HCT116 (cell line): ENCODE measurements at regions of chr6 and their contacts with region 1.

Region 1: DNA sequence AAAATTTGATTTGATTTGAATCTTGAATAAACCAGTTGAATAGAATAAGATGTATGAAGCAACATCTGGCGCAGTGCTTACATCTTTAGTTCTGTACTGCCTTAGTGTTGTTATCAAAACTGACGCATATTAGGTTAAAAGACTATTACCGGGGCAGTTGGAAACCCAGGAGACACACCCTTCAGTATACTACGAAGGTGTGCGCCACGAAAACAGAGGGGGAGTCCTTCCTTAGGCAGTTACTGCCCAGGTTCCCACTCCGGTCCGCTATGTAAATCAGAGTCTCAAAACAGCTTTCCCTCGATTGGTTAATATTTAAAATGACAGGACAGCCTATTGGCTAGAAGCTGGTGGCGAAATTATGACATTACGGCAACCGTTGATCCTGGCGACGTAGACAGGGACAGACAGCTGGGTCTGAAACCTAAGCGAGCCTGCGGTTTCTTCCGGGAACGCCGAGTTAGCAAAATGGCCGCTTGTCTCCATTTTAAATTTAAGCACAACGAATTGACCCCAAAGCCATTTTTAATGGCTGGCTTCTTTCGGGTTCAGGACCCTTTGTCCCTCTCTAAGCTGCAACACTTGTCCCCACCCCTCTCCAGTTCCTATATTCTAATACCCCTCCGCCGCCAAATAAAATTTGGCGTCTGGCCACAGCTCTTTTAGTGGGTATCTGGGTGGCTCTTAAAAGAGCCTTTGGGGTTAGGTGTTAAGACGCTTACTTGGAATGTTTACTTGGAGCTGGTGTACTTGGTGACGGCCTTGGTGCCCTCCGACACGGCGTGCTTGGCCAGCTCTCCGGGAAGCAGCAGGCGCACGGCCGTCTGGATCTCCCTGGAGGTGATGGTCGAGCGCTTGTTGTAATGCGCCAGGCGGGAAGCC is 35.8 kb downstream of the HFE start:
- DNase-seq: peak; percentile 99
- ATAC-seq: peak; percentile 55
- H3K4me3 ChIP-seq: peak overlapping the region; percentile 70 to 91
- H3K27ac ChIP-seq: peak overlapping the region; percentile 99
- H3K4me1 ChIP-seq: peaks cover 47 to 69% of the 10 kb centered on the region in 2 experiments
- H3K27me3 ChIP-seq: no peaks in the 10 kb centered on the region
- CTCF ChIP-seq: no peak
- POLR2A ChIP-seq: peak; percentile 98
- RAD21 ChIP-seq: peak; percentile 30

Region 2: DNA sequence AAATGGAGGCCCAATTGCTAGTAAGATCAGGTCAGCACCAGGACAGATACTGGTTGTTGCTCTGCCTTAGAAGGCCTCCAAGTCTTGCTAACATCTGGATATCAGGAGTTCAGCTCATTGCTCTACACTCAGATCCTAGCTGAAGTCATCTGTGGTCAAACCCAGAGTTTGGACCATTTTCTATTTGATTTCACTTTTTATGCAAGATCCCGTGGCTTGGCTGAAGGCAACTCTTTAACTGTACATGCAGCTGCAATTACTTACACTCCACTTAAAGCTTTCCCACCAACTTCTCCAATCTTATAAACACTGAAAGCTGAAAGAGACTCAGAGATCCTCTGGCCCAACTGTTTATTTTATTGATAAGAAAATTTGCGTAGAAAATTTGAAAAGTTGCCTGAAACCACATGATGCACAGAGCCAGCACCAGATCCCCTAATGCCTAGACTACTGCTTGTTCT is 195.2 kb before region 1 on chr6:
- CTCF ChIA-PET with region 1: no interaction called
- POLR2A ChIA-PET with region 1: no interaction called
- RAD21 ChIA-PET with region 1: no interaction called
- intact Hi-C with region 1: no loop called
- DNase-seq: no peak
- ATAC-seq: no peak
- H3K4me3 ChIP-seq: no peak overlapping the region
- H3K27ac ChIP-seq: no peak overlapping the region
- H3K4me1 ChIP-seq: no peaks in the 10 kb centered on the region
- H3K27me3 ChIP-seq: no peaks in the 10 kb centered on the region
- CTCF ChIP-seq: no peak
- POLR2A ChIP-seq: no peak
- RAD21 ChIP-seq: no peak

Region 3: GRCh38 chr6:26031595-26032339 is 91.3 kb before region 1 on chr6:
- CTCF ChIA-PET with region 1: no interaction called
- POLR2A ChIA-PET with region 1: interaction called, 89 read pairs
- RAD21 ChIA-PET with region 1: no interaction called
- intact Hi-C with region 1: loop called (anchors 2 kb)
- DNase-seq: peak; percentile 99
- ATAC-seq: peak; percentile 66
- H3K4me3 ChIP-seq: peak overlapping the region; percentile 70 to 74
- H3K27ac ChIP-seq: peak overlapping the region; percentile 98
- H3K4me1 ChIP-seq: peaks cover 51 to 87% of the 10 kb centered on the region in 2 experiments
- H3K27me3 ChIP-seq: no peaks in the 10 kb centered on the region
- CTCF ChIP-seq: no peak
- POLR2A ChIP-seq: peak; percentile 99
- RAD21 ChIP-seq: peak; percentile 5; the same call in 1 of the 2 replicates

Region 4: GRCh38 chr6:26136321-26136720 is 13.3 kb after region 1 on chr6:
- CTCF ChIA-PET with region 1: no interaction called
- POLR2A ChIA-PET with region 1: interaction called, 61 read pairs
- RAD21 ChIA-PET with region 1: no interaction called
- intact Hi-C with region 1: no loop called
- DNase-seq: no peak
- ATAC-seq: no peak
- H3K4me3 ChIP-seq: no peak overlapping the region
- H3K27ac ChIP-seq: no peak overlapping the region
- H3K4me1 ChIP-seq: 0 out of 4 replicates have a peak, but pooled peaks cover 0 to under 1% of the 10 kb centered on the region in 2 experiments
- H3K27me3 ChIP-seq: no peaks in the 10 kb centered on the region
- CTCF ChIP-seq: no peak
- POLR2A ChIP-seq: no peak
- RAD21 ChIP-seq: no peak

Region 5: DNA sequence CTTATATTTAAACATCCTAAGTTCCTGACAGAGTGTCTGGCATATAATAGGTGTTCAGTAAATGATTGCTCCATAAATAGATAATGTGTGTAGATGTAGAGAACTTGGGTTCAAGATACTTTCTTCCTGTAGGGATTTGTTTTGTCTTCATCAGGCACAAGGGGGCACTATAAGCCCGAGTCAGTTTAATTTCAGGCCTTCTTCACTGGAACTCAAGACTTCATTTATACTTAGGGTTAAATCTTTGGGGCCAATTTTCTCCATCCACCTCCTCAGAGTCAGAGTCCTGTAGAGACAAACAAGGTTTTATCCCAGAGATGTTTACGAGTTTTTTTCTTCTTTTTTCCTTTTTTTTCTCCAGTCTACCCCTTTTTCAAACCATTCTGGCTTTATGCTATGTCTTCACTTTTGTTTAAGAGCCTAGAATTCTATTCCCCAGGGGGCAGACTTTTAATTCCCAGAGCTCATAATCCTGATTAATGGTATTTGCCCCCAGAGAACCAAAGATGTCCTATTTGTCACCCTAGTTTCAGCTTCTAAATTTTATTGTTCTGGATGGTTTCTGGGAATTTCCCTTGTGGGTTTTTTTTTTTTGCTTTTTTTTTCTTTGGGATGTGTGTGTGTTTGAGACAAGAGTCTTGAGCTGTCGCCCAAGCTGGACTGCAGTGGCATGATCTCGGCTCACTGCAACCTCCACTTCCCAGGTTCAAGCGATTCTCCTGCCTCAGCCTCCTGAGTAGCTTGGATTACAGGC is 52.6 kb after region 1 on chr6:
- CTCF ChIA-PET with region 1: no interaction called
- POLR2A ChIA-PET with region 1: interaction called, 21 read pairs
- RAD21 ChIA-PET with region 1: no interaction called
- intact Hi-C with region 1: no loop called
- DNase-seq: no peak
- ATAC-seq: no peak
- H3K4me3 ChIP-seq: no peak overlapping the region
- H3K27ac ChIP-seq: peak overlapping the region; percentile 46; the same call in 1 of the 2 replicates
- H3K4me1 ChIP-seq: peaks cover 11 to 28% of the 10 kb centered on the region in 2 experiments
- H3K27me3 ChIP-seq: no peaks in the 10 kb centered on the region
- CTCF ChIP-seq: peak; percentile 62 to 75 (median 73)
- POLR2A ChIP-seq: no peak
- RAD21 ChIP-seq: peak; percentile 83

Region 6: GRCh38 chr6:26204332-26205165 is 81.5 kb after region 1 on chr6:
- CTCF ChIA-PET with region 1: interaction called, 3 read pairs
- POLR2A ChIA-PET with region 1: interaction called, 152 read pairs
- RAD21 ChIA-PET with region 1: no interaction called
- intact Hi-C with region 1: loop called (anchors 1 kb)
- DNase-seq: peak; percentile 98
- ATAC-seq: peak; percentile 72
- H3K4me3 ChIP-seq: peak overlapping the region; percentile 63 to 71
- H3K27ac ChIP-seq: peak overlapping the region; percentile 98
- H3K4me1 ChIP-seq: peaks cover 26 to 40% of the 10 kb centered on the region in 2 experiments
- H3K27me3 ChIP-seq: no peaks in the 10 kb centered on the region
- CTCF ChIP-seq: peak in 1 of 3 experiments; percentile 20; a peak in 2 of 6 replicates
- POLR2A ChIP-seq: peak; percentile 99
- RAD21 ChIP-seq: peak; percentile 2; the same call in 1 of the 2 replicates

Region 7: DNA sequence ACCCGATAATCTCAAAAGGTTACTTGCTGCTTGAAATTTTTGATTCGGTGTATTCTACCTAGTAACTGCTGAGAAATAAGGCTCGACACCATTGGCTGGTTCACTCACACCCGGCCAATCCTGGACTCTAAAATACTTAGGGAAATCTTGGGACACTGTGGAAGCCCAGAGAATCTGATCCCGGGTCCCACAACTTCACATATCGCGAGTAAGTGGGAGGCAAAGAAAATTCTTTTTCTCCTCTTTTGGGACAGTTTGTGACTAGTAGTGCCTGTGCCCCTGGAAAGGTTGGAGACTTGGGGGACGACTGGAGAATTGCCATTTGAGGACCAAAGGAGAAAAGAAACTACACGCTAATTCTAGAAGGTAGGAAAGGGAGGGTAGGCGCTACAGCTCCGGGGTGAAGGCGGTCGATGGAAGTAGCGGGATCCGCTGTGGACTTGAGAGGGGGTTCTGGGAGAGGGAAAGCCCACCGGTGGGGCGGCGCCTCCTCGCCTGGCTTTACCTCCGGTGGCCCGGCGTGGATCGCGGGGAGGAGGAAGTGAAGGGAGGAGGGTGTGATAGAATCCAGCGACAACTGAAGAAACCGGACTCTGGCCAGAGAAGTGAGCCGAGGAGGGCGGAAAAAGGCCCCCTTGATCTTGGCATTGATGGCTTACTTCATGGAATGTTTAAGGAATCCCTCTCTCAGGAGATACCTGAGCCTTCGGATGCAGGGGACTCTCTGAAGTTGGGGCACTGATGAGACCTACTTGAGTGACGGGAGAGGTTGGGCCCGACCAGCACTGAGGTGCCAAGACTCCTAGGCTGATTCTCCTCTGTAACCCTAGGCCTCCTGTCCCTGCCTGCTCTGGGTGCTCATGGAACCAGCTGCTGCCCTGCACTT is 298.5 kb after region 1 on chr6:
- CTCF ChIA-PET with region 1: no interaction called
- POLR2A ChIA-PET with region 1: no interaction called
- RAD21 ChIA-PET with region 1: no interaction called
- intact Hi-C with region 1: no loop called
- DNase-seq: peak; percentile 86
- ATAC-seq: peak; percentile 98
- H3K4me3 ChIP-seq: peak overlapping the region; percentile 84 to 93
- H3K27ac ChIP-seq: peak overlapping the region; percentile 69
- H3K4me1 ChIP-seq: peaks cover 4 to 7% of the 10 kb centered on the region in 2 experiments; a peak in 3 of 4 replicates
- H3K27me3 ChIP-seq: no peaks in the 10 kb centered on the region
- CTCF ChIP-seq: no peak
- POLR2A ChIP-seq: peak; percentile 74
- RAD21 ChIP-seq: no peak

Region 8: GRCh38 chr6:27825025-27825793 is 1702.2 kb after region 1 on chr6:
- CTCF ChIA-PET with region 1: no interaction called
- POLR2A ChIA-PET with region 1: interaction called, 11 read pairs
- RAD21 ChIA-PET with region 1: no interaction called
- intact Hi-C with region 1: no loop called
- DNase-seq: no peak
- ATAC-seq: no peak
- H3K4me3 ChIP-seq: peak overlapping the region; percentile 50 to 71
- H3K27ac ChIP-seq: peak overlapping the region; percentile 76
- H3K4me1 ChIP-seq: peaks cover 5 to 39% of the 10 kb centered on the region in 2 experiments; a peak in 3 of 4 replicates
- H3K27me3 ChIP-seq: no peaks in the 10 kb centered on the region
- CTCF ChIP-seq: no peak
- POLR2A ChIP-seq: no peak
- RAD21 ChIP-seq: no peak